ENCODE measurements at regions of chr1 and their contacts with region 1.

Region 1: GRCh38 chr1:192846950-192847349 is 38.1 kb downstream of the RGS2 start:
- DNase-seq: no peak
- ATAC-seq: no peak
- H3K4me3 ChIP-seq: no peak overlapping the region
- H3K4me3 Mint-ChIP-seq: no peak overlapping the region
- H3K27ac ChIP-seq: no peak overlapping the region
- H3K27ac Mint-ChIP-seq: no peak overlapping the region
- H3K4me1 ChIP-seq: no peaks in the 10 kb centered on the region
- H3K4me1 Mint-ChIP-seq: no peaks in the 10 kb centered on the region
- H3K27me3 ChIP-seq: no peaks in the 10 kb centered on the region
- H3K27me3 Mint-ChIP-seq: peaks cover 18% of the 10 kb centered on the region
- CTCF ChIP-seq: no peak

Region 2: DNA sequence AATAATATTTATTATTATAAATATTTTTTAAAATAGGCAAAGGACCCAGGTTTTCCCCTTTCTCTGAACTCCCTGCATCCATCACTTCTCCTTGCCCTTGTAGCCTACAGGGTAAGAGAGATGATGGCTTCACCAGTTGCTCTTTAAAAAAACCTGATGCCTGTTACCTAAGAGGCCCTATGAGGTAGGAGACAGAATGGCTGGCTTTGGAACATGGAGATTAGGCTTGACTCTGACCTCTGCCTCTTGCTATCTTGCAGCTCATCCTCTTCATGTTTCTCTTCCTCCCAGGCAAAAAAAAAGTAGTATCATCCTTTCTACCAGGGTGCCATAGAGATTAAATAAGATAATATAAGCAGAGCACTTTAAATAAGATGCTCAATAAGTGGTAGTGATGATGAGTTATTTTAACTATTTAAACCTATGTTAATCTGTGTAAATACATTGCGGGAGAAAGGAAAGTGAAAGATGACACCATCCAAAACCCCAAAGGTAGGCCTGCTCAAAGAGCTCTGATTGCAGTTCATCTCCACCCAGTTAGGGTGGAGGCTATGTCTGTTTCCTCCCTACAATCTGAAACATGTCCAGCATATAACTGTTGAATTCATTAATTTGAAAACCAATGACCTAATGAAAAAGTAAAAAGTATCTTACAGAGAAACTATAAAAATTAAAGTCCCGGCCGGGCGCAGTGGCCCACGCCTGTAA is 13.7 kb after region 1 on chr1:
- CTCF ChIA-PET with region 1: no interaction called
- POLR2A ChIA-PET with region 1: no interaction called
- intact Hi-C with region 1: no loop called
- DNase-seq: no peak
- ATAC-seq: no peak
- H3K4me3 ChIP-seq: no peak overlapping the region
- H3K4me3 Mint-ChIP-seq: no peak overlapping the region
- H3K27ac ChIP-seq: no peak overlapping the region
- H3K27ac Mint-ChIP-seq: no peak overlapping the region
- H3K4me1 ChIP-seq: no peaks in the 10 kb centered on the region
- H3K4me1 Mint-ChIP-seq: no peaks in the 10 kb centered on the region
- H3K27me3 ChIP-seq: no peaks in the 10 kb centered on the region
- H3K27me3 Mint-ChIP-seq: peaks cover 3% of the 10 kb centered on the region
- CTCF ChIP-seq: no peak

Region 3: DNA sequence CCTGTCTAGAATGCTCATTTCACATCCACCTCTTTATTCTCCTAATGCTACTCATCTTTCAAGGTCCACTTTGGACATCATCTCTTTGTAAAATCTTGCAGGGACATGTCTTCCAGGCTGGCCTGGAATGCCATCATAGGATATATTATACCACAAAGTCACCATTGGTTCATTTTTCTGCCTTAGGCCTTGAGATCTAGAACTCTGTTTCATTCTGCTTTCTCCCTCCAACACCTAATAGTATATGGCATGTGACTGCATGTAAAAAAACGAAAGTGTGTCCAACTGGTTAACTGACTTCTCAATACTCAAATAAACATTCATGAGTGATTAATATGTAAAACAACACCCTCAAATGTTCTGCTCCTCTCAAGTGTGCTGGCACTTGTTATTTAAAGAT is 46.0 kb after region 1 on chr1:
- CTCF ChIA-PET with region 1: no interaction called
- POLR2A ChIA-PET with region 1: no interaction called
- intact Hi-C with region 1: loop called in 1 of 2 experiments (anchors 1 kb)
- DNase-seq: no peak
- ATAC-seq: no peak
- H3K4me3 ChIP-seq: no peak overlapping the region
- H3K4me3 Mint-ChIP-seq: no peak overlapping the region
- H3K27ac ChIP-seq: no peak overlapping the region
- H3K27ac Mint-ChIP-seq: no peak overlapping the region
- H3K4me1 ChIP-seq: no peaks in the 10 kb centered on the region
- H3K4me1 Mint-ChIP-seq: no peaks in the 10 kb centered on the region
- H3K27me3 ChIP-seq: no peaks in the 10 kb centered on the region
- H3K27me3 Mint-ChIP-seq: no peaks in the 10 kb centered on the region
- CTCF ChIP-seq: no peak

Region 4: DNA sequence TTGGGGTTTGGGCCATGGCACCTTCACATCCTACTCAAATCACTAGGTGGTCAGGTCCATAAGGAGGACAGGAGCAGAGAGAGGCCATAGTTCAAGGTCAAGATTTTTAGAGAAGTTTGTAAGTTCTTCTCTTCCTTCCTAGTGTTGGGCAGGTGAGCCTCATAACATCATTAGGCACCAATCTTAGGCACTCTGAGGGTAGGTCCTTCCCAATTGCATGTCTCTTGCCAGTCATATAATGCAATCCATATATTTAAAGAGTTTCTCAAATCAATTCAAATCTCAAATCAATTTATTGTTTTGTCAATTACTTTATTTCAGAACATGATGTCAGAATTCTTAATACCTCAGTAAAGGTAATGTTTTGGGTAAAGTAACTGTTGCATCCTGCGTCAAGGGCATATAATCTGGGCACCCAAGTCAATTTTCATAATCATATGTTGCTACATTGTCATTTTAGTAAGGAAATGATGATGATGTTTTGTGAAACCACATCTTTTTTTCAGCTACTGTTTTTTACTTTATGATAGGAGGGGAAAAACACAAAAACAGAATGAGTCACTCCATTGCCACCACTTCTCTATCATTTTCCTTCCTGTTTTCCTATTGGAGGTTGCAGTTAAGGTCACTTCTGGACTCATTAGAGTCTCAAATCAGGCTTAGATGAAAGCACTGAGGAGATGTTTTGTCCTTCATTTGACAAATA is 89.5 kb after region 1 on chr1:
- CTCF ChIA-PET with region 1: no interaction called
- POLR2A ChIA-PET with region 1: no interaction called
- intact Hi-C with region 1: no loop called
- DNase-seq: peak in 2 of 9 experiments; percentile 24 to 45
- ATAC-seq: peak; percentile 61
- H3K4me3 ChIP-seq: no peak overlapping the region
- H3K4me3 Mint-ChIP-seq: no peak overlapping the region
- H3K27ac ChIP-seq: no peak overlapping the region
- H3K27ac Mint-ChIP-seq: peak overlapping the region; percentile 46
- H3K4me1 ChIP-seq: no peaks in the 10 kb centered on the region
- H3K4me1 Mint-ChIP-seq: peaks cover 6% of the 10 kb centered on the region
- H3K27me3 ChIP-seq: no peaks in the 10 kb centered on the region
- H3K27me3 Mint-ChIP-seq: no peaks in the 10 kb centered on the region
- CTCF ChIP-seq: no peak

Measured in CD8-positive, alpha-beta T cell (primary cell).